K562 (cell line): ENCODE measurements at regions of chr3 and their contacts with region 1.

Region 1: DNA sequence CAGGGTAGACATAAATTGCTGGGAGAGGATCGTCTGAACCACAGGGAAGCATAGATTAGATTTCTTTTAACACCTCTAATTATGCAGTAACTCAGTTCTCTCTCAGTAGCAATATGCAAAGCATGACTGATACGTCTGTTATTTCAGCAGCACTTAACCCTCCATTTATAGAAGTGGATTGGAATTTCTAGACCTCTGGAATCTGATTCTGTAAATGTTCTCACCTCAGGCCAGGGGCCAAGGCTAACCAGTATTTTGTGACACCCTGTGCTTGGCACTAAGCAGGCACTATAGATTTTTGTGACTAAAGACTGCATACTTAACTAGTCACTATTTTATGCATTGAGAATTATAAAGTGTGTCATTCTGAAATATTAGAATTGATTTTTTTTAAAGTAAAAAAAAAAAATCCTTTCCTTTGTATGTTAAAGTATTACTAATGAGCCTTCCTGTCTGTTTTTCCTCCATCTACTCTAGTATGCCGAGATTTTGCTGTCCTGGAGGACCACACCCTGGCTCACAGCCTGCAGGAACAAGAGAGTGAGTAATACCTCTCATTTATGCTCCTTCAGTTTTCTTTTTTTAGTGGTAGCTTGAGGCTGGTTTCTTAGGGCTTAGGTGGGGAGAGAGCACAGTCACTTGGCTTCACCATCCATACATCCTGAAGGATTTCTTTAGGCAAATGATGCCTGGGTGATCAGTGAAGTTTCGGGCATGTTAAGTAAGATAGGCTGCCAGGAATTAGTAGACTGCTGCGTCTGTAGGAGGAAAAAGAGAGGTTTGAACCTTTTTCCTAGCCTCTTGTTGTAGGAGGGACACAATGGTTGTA is 26.5 kb upstream of the UTS2B start:
- DNase-seq: no peak
- ATAC-seq: no peak
- H3K4me3 ChIP-seq: no peak overlapping the region
- H3K27ac ChIP-seq: no peak overlapping the region
- H3K4me1 ChIP-seq: no peaks in the 10 kb centered on the region
- H3K27me3 ChIP-seq: no peaks in the 10 kb centered on the region
- CTCF ChIP-seq: no peak
- EP300 ChIP-seq: no peak
- POLR2A ChIP-seq: no peak
- RAD21 ChIP-seq: no peak

Region 2: GRCh38 chr3:191336833-191337232 is 20.0 kb before region 1 on chr3:
- CTCF ChIA-PET with region 1: no interaction called
- POLR2A ChIA-PET with region 1: interaction called, 14 read pairs
- in situ Hi-C with region 1: no loop called
- intact Hi-C with region 1: no loop called
- DNase-seq: peak in 3 of 4 experiments; percentile 0 to 1 (median 1)
- ATAC-seq: peak; percentile 25
- H3K4me3 ChIP-seq: no peak overlapping the region
- H3K27ac ChIP-seq: no peak overlapping the region; the same call in 2 of the 3 replicates
- H3K4me1 ChIP-seq: peaks cover 6 to 41% of the 10 kb centered on the region in 2 experiments; a peak in 4 of 5 replicates
- H3K27me3 ChIP-seq: no peaks in the 10 kb centered on the region
- CTCF ChIP-seq: no peak
- EP300 ChIP-seq: no peak
- POLR2A ChIP-seq: no peak
- RAD21 ChIP-seq: no peak

Region 3: GRCh38 chr3:191345334-191345733 is 11.5 kb before region 1 on chr3:
- CTCF ChIA-PET with region 1: no interaction called
- POLR2A ChIA-PET with region 1: interaction called, 18 read pairs
- in situ Hi-C with region 1: no loop called
- intact Hi-C with region 1: no loop called
- DNase-seq: peak in 3 of 4 experiments; percentile 0 to 1 (median 1)
- ATAC-seq: no peak
- H3K4me3 ChIP-seq: no peak overlapping the region
- H3K27ac ChIP-seq: no peak overlapping the region
- H3K4me1 ChIP-seq: no peaks in the 10 kb centered on the region; a peak in 1 of 5 replicates
- H3K27me3 ChIP-seq: no peaks in the 10 kb centered on the region
- CTCF ChIP-seq: no peak
- EP300 ChIP-seq: no peak
- POLR2A ChIP-seq: no peak
- RAD21 ChIP-seq: no peak